ENCODE measurements at regions of chr19 and their contacts with region 1.

Region 1: GRCh38 chr19:55160128-55160985 is 2.8 kb upstream of the TNNI3 start:
- DNase-seq: peak; percentile 93
- ATAC-seq: peak; percentile 94
- H3K4me3 Mint-ChIP-seq: no peak overlapping the region
- H3K27ac Mint-ChIP-seq: no peak overlapping the region
- H3K4me1 Mint-ChIP-seq: peaks cover 13% of the 10 kb centered on the region
- H3K27me3 Mint-ChIP-seq: peaks cover 29% of the 10 kb centered on the region

Region 2: GRCh38 chr19:54881867-54882266 is 278.5 kb before region 1 on chr19:
- CTCF ChIA-PET with region 1: interaction called, 10 read pairs
- POLR2A ChIA-PET with region 1: no interaction called
- DNase-seq: no peak
- ATAC-seq: no peak
- H3K4me3 Mint-ChIP-seq: no peak overlapping the region
- H3K27ac Mint-ChIP-seq: no peak overlapping the region
- H3K4me1 Mint-ChIP-seq: peaks cover 21% of the 10 kb centered on the region
- H3K27me3 Mint-ChIP-seq: peaks cover 24% of the 10 kb centered on the region

Region 3: DNA sequence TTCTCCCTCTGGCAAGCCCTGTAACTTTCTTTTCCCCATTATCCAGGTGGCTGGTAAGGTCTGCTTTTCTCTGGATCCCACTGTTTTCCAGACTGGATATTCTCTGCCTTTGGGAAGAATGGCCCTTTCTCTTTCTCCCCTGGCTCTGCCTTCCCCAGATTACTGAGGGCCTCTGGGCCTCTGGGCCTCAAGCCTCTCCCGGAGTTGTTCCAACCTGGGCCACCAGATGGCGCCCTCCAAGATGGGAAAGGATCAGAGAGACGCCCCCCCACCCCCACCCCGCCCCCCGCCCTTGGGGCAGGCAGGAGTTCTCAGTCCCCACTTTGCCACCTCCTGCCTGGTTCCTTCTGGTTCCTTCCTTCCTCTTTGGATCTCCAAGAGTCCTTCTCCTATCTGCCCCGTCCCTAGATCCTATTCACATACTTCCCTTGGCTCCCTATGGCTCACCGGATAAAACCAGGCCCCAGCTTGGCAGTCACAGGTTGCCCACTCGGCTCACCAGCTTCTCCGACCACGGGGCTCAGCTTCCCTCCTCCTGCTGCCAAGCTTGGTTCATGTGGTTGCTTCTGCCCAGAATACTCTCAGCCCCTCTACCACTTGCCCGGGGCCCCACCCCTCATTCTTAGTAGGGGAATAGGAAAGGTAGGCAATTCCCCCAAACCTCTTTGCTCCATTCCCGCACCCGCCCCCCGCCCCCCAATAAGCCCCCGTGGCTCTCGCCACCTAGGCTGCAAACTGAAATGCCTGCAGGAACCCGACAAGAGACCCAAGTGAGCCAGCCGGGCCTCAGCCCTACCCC is 71.6 kb before region 1 on chr19:
- CTCF ChIA-PET with region 1: interaction called, 10 read pairs
- POLR2A ChIA-PET with region 1: no interaction called
- DNase-seq: peak; percentile 80
- ATAC-seq: peak; percentile 28
- H3K4me3 Mint-ChIP-seq: peak overlapping the region; percentile 31
- H3K27ac Mint-ChIP-seq: peak overlapping the region; percentile 43
- H3K4me1 Mint-ChIP-seq: peaks cover 26% of the 10 kb centered on the region
- H3K27me3 Mint-ChIP-seq: peaks cover 35% of the 10 kb centered on the region

Region 4: DNA sequence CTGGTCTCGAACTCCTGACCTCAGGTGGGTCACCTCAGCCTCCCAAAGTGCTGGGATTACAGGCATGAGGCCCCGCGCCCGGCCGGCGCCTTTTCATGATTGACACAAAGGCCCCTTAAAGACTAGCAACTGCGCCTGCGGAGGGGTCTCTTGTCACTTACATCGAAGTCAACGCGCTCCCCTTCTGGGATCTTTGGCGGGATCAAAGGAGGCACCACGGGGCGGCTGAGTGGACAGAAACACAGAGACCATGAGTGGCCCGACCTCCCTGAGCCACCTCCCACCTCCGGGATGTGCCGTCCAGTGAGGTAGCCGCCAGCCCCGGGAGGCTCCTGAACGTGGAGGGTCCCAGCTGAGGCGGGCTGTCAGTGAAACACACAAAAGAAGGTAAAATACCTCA is 18.7 kb before region 1 on chr19:
- CTCF ChIA-PET with region 1: interaction called, 22 read pairs
- POLR2A ChIA-PET with region 1: no interaction called
- DNase-seq: no peak
- ATAC-seq: no peak
- H3K4me3 Mint-ChIP-seq: no peak overlapping the region
- H3K27ac Mint-ChIP-seq: no peak overlapping the region
- H3K4me1 Mint-ChIP-seq: peaks cover 7% of the 10 kb centered on the region
- H3K27me3 Mint-ChIP-seq: peaks cover 20% of the 10 kb centered on the region

Measured in activated CD8-positive, alpha-beta T cell treated with anti-CD3 and anti-CD28 coated beads, Interleukin-2, amount 10 ng/mL, durations not matched to agents 7 days and 5 days (primary cell).